ENCODE measurements at regions of chr2 and their contacts with region 1.

Region 1: DNA sequence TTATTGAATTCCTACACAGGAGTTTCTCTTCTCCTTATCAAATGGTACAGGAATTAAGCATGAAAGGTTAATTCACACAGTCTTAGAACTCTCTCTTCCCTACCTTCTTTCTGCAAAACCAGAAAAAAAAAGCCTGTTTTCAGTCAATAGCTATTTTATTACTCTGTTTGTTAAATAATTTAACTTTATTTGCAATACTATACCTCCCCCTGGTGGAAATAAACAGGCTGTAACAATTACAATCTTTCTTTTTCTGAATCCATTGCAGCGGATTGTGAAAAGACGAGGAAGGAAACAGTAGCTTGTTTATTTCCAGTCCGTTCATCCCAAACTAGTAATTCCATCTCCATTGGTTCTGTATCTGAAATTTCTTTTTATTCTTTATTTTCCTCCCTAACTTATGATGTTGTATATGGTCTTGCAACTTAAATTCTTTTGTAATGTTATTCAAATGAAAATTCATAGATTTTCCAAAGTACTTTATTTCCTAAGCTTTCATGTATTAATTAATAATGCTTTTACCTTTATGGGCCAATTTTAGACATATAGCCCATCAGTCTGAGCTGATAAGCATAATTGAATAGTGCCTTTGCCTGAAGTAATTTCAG is 165.2 kb downstream of the SH3BP4 start:
- DNase-seq: no peak
- ATAC-seq: no peak

Region 2: GRCh38 chr2:233982421-233983121 is 1134.4 kb before region 1 on chr2:
- intact Hi-C with region 1: no loop called
- DNase-seq: no peak
- ATAC-seq: no peak

Region 3: DNA sequence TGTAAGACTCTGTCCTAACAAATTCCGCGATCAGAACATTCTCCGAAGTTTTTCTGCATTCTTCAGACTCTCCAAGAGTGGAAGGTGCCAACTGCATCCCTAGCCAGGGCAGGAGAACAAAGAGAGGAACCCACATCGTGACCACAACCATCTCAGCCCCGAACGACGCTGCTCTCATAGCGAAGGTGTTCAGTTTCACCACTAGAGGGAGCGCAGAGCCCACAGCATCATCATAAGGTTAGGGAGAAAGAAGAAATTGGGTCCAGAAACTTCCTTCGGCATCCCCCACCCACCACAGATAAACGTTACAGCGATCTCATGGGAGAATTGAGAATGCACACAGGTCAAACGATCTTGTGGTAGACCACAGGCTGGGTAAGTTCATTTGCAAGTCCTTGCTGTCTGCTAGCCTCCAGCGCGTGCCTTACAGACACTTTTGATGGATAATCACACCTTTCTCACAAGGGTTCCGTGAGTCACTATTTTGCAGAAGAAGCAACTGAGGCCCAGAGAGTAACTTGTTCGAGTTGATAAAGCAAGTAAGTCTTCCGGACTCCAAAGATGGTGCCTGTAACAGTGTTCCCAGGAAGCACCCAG is 566.4 kb before region 1 on chr2:
- intact Hi-C with region 1: loop called (anchors 2 kb)
- DNase-seq: peak; percentile 60
- ATAC-seq: peak; percentile 81

Region 4: DNA sequence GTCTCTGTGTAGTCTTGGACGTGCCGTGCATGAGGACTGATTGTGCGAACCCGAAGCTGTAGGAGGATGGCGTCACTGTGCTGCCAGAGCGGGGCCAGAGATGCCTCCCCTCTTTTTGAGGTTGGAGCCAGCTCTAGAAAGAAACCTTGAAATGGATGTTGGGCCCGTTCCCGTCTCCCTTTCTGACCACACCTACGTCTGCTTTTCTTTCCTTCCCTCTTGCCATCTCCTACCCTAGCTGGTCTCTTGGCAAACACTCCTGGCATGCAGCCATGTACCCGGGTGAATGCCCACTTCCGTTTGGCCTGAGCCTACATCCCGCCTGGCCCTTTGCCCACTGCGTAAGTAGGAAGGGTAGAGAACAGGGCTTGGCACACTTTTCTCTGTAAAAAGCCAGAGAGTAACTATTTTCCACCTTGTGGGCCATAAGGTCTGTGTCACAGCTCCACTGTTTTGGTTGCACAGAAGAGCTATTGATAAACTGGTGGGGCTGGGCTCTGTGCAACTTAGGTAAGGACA is 127.7 kb before region 1 on chr2:
- intact Hi-C with region 1: no loop called
- DNase-seq: peak; percentile 87
- ATAC-seq: peak; percentile 70